Caco-2 (cell line): ENCODE measurements at regions of chr13 and their contacts with region 1.

Region 1: DNA sequence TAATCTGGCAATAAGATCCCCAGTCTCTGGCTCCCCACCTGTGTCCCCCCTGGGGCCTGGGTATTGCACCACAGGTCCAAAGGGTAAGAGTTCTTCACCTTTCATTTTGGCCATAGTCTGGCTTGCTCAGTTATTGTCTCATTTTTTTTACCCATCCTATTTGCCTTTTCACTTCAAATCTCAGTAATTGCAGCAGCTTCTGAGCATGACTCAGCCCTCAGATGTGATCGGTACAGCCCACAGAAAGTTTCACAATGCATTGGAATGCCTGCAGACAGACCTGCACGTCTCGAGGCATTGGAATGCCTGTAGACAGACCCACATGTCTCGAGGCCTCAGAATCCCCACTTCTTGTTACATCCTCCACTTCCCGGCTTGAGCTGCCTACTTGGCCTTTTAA is 173.6 kb downstream of the NUFIP1 start:
- DNase-seq: peak; percentile 90 to 96
- H3K4me3 ChIP-seq: no peak overlapping the region
- H3K4me3 Mint-ChIP-seq: peak overlapping the region; percentile 1
- H3K27ac Mint-ChIP-seq: peak overlapping the region; percentile 76
- H3K4me1 ChIP-seq: peaks cover 86% of the 10 kb centered on the region
- H3K4me1 Mint-ChIP-seq: peaks cover 77% of the 10 kb centered on the region
- H3K27me3 ChIP-seq: no peaks in the 10 kb centered on the region
- H3K27me3 Mint-ChIP-seq: no peaks in the 10 kb centered on the region
- CTCF ChIP-seq: no peak

Region 2: DNA sequence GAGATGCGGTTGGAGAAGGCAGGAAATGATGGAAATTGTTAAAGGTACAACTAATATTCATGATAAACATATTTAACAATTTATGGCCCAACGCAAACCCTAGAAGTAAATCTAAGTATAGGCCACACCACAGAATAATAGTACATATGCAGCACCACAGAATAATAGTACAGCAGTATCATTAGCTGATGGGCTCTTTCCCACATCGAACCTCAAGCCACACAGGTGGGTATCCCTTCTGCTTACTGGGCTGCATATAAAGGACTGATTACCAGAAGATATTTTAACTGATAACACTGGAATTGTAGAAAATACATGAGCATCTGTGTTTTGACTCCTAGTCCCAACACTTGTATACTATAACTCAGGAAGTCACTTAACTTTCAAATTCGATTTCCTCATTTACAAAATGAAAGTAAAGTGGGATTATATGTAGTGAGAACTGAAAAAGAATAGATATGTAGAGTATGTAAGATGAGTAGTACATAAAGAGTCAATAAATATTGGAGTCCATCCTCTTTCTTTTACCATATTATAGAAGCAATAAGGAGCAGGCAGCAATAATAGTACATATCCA is 331.0 kb before region 1 on chr13:
- CTCF ChIA-PET with region 1: no interaction called
- POLR2A ChIA-PET with region 1: no interaction called
- intact Hi-C with region 1: loop called (anchors 1 kb)
- DNase-seq: no peak
- H3K4me3 ChIP-seq: no peak overlapping the region
- H3K4me3 Mint-ChIP-seq: no peak overlapping the region
- H3K27ac Mint-ChIP-seq: no peak overlapping the region
- H3K4me1 ChIP-seq: no peaks in the 10 kb centered on the region
- H3K4me1 Mint-ChIP-seq: peaks cover 8% of the 10 kb centered on the region
- H3K27me3 ChIP-seq: no peaks in the 10 kb centered on the region
- H3K27me3 Mint-ChIP-seq: no peaks in the 10 kb centered on the region
- CTCF ChIP-seq: no peak

Region 3: DNA sequence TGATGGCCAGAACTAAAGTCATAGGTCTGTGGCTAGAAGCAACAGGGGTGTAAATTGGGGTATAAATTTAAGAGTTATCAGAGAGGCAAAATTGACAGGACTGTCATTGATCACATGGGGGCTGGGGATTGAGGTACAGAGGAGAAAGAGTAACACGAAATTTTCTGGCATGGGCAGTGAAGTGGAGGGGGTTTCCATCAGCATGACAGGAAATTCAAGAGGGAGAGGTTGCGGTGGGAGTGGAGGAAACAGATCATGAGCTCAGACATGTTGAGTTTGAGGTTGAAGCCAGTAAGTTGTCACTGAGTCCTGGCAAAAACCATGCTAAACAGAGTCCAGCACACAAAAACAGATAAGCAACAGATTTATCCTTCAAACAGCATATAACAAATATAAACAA is 47.4 kb before region 1 on chr13:
- CTCF ChIA-PET with region 1: interaction called, 3 read pairs
- POLR2A ChIA-PET with region 1: no interaction called
- intact Hi-C with region 1: loop called (anchors 2 kb)
- DNase-seq: no peak
- H3K4me3 ChIP-seq: no peak overlapping the region
- H3K4me3 Mint-ChIP-seq: no peak overlapping the region
- H3K27ac Mint-ChIP-seq: peak overlapping the region; percentile 45
- H3K4me1 ChIP-seq: peaks cover 55% of the 10 kb centered on the region
- H3K4me1 Mint-ChIP-seq: peaks cover 29% of the 10 kb centered on the region
- H3K27me3 ChIP-seq: no peaks in the 10 kb centered on the region
- H3K27me3 Mint-ChIP-seq: no peaks in the 10 kb centered on the region
- CTCF ChIP-seq: no peak

Region 4: GRCh38 chr13:44879463-44880058 is 63.9 kb after region 1 on chr13:
- CTCF ChIA-PET with region 1: no interaction called
- POLR2A ChIA-PET with region 1: no interaction called
- intact Hi-C with region 1: loop called (anchors 2 kb)
- DNase-seq: peak; percentile 39 to 52
- H3K4me3 ChIP-seq: no peak overlapping the region
- H3K4me3 Mint-ChIP-seq: no peak overlapping the region
- H3K27ac Mint-ChIP-seq: no peak overlapping the region
- H3K4me1 ChIP-seq: no peaks in the 10 kb centered on the region
- H3K4me1 Mint-ChIP-seq: no peaks in the 10 kb centered on the region
- H3K27me3 ChIP-seq: no peaks in the 10 kb centered on the region
- H3K27me3 Mint-ChIP-seq: no peaks in the 10 kb centered on the region
- CTCF ChIP-seq: peak; percentile 47 to 48

Region 5: DNA sequence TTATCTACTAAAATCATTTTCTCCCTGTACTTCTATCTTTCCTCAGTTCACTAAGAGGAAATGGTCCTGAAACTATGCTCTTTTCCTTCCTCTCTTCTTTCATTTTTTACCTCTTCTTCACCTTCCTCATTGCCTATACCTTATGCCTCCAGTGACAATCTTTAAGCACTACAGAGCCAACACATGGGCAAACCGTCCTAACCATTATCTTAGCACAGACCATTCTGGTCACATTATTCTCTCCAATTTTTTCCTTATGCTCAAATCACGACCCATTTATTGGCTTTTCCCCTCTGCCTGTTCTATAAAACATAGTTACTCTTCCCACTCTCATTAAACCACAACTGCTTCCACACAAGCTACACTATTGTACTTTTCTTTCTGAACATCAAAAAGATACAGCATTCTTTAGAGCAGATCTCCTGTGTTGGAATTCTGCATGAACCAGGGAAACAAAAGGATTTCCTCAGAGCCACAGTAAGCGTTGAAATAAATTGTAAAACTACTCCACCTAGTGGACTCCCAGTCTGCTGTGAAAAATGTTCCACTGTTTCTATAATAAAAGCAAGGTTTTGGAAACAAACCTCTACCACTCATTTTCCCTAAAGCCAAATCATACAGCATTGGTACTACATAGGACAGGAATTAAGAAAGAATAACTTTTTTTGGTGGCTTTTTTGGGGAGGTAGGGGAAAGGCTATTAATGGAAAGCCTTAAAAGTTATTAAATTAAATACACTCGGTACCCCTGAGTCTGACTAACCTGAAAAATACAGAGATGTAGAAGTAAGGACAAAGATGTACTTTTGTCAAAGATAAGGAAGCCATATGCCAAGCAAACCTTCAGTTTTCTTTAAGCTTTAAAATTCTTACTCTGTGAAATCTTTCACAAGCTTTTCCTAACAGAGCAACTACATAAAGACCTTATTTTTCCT is 154.2 kb after region 1 on chr13:
- CTCF ChIA-PET with region 1: interaction called, 3 read pairs
- POLR2A ChIA-PET with region 1: no interaction called
- intact Hi-C with region 1: loop called (anchors 10 kb)
- DNase-seq: peak in 1 of 2 experiments; percentile 62
- H3K4me3 ChIP-seq: no peak overlapping the region
- H3K4me3 Mint-ChIP-seq: no peak overlapping the region
- H3K27ac Mint-ChIP-seq: no peak overlapping the region
- H3K4me1 ChIP-seq: peaks cover 14% of the 10 kb centered on the region
- H3K4me1 Mint-ChIP-seq: peaks cover 14% of the 10 kb centered on the region
- H3K27me3 ChIP-seq: no peaks in the 10 kb centered on the region
- H3K27me3 Mint-ChIP-seq: no peaks in the 10 kb centered on the region
- CTCF ChIP-seq: peak; percentile 74 to 81